Mammary epithelial cell (primary cell): ENCODE measurements at regions of chr2 and their contacts with region 1.

Region 1: GRCh38 chr2:70994756-70995729 is at the start of gene TEX261:
- DNase-seq: peak; percentile 84
- H3K4me3 ChIP-seq: peak within 1 kb of the TSS; percentile 72 to 89 (median 76)
- H3K27ac ChIP-seq: peak within 1 kb of the TSS; percentile 42
- H3K4me1 ChIP-seq: peaks cover 25% of the 10 kb centered on the region
- H3K27me3 ChIP-seq: no peaks in the 10 kb centered on the region
- CTCF ChIP-seq: peak; percentile 56 to 70
- total RNA-seq, gene TEX261: 30.0 to 61.6 TPM

Region 2: GRCh38 chr2:70964596-70965386 is 30.3 kb before region 1 on chr2:
- CTCF ChIA-PET with region 1: no interaction called
- dilution Hi-C with region 1: no loop called
- in situ Hi-C with region 1: no loop called
- intact Hi-C with region 1: loop called (anchors 2 kb)
- DNase-seq: peak; percentile 52
- H3K4me3 ChIP-seq: peak overlapping the region; percentile 40 to 47 (median 43)
- H3K27ac ChIP-seq: no peak overlapping the region
- H3K4me1 ChIP-seq: peaks cover 3% of the 10 kb centered on the region
- H3K27me3 ChIP-seq: no peaks in the 10 kb centered on the region
- CTCF ChIP-seq: peak; percentile 52 to 87

Region 3: GRCh38 chr2:70984576-70985282 is 10.3 kb before region 1 on chr2:
- CTCF ChIA-PET with region 1: no interaction called
- dilution Hi-C with region 1: no loop called
- in situ Hi-C with region 1: no loop called
- intact Hi-C with region 1: loop called (anchors 1 kb)
- DNase-seq: peak; percentile 48
- H3K4me3 ChIP-seq: no peak overlapping the region
- H3K27ac ChIP-seq: no peak overlapping the region
- H3K4me1 ChIP-seq: no peaks in the 10 kb centered on the region
- H3K27me3 ChIP-seq: no peaks in the 10 kb centered on the region
- CTCF ChIP-seq: peak; percentile 59 to 66